Naive thymus-derived CD4-positive, alpha-beta T cell (primary cell): ENCODE measurements at regions of chr6 and their contacts with region 1.

Region 1: DNA sequence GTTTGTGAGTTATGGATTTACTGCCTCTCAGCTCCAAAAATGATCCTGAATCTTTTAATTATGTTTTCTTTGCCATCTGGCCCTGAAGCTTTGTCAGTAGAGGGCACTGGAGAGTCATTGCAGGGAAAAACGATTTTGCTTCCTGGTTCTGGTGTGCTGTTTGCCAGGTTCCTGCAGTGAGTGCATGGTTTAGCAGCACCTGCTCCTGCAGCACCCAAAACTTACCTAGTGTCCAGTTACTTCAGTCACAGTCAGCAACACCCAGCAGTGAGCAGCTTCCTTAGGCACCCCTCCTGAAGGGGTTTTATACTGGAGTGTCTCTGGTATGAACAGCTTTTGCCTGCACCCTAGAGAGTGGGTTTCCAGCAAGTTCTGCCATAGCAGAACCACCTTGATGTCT is 6.0 kb upstream of the TRIM26 start:
- DNase-seq: peak in 8 of 9 donors; percentile 17 to 70 (median 54)
- ATAC-seq: peak; percentile 79
- H3K4me3 ChIP-seq: no peak overlapping the region
- H3K4me3 Mint-ChIP-seq: no peak overlapping the region
- H3K27ac ChIP-seq: no peak overlapping the region
- H3K27ac Mint-ChIP-seq: peak overlapping the region in 5 of 9 donors; percentile 3 to 80 (median 55)
- H3K4me1 ChIP-seq: peaks cover 4 to 5% of the 10 kb centered on the region in 2 donors
- H3K4me1 Mint-ChIP-seq: peaks cover 10 to 23% (median 20%) of the 10 kb centered on the region in 7 donors
- H3K27me3 ChIP-seq: no peaks in the 10 kb centered on the region
- H3K27me3 Mint-ChIP-seq: peaks cover 0 to 6% (median 0%) of the 10 kb centered on the region in 5 donors

Region 2: GRCh38 chr6:30238174-30238795 is 19.0 kb after region 1 on chr6:
- CTCF ChIA-PET with region 1: interaction called, 3 read pairs
- POLR2A ChIA-PET with region 1: interaction called, 3 read pairs
- intact Hi-C with region 1: loop called in 1 of 2 experiments (anchors 1 kb)
- DNase-seq: peak in 5 of 9 donors; percentile 8 to 36 (median 27)
- ATAC-seq: peak; percentile 62
- H3K4me3 ChIP-seq: no peak overlapping the region
- H3K4me3 Mint-ChIP-seq: no peak overlapping the region
- H3K27ac ChIP-seq: no peak overlapping the region
- H3K27ac Mint-ChIP-seq: no peak overlapping the region
- H3K4me1 ChIP-seq: no peaks in the 10 kb centered on the region
- H3K4me1 Mint-ChIP-seq: peaks cover 0 to 4% (median 0%) of the 10 kb centered on the region in 7 donors
- H3K27me3 ChIP-seq: peaks cover 0 to 3% of the 10 kb centered on the region in 2 donors
- H3K27me3 Mint-ChIP-seq: peaks cover 18 to 59% (median 32%) of the 10 kb centered on the region in 5 donors

Region 3: GRCh38 chr6:30259140-30260035 is 40.1 kb after region 1 on chr6:
- CTCF ChIA-PET with region 1: interaction called, 3 read pairs
- POLR2A ChIA-PET with region 1: no interaction called
- intact Hi-C with region 1: loop called (anchors 1 to 5 kb)
- DNase-seq: peak; percentile 42 to 68 (median 53)
- ATAC-seq: peak; percentile 93
- H3K4me3 ChIP-seq: peak overlapping the region; percentile 79
- H3K4me3 Mint-ChIP-seq: peak overlapping the region; percentile 78 to 97 (median 90)
- H3K27ac ChIP-seq: peak overlapping the region; percentile 78
- H3K27ac Mint-ChIP-seq: peak overlapping the region in 8 of 9 donors; percentile 65 to 91 (median 78)
- H3K4me1 ChIP-seq: peaks cover 5 to 6% of the 10 kb centered on the region in 2 donors
- H3K4me1 Mint-ChIP-seq: peaks cover 7 to 17% (median 13%) of the 10 kb centered on the region in 7 donors
- H3K27me3 ChIP-seq: no peaks in the 10 kb centered on the region
- H3K27me3 Mint-ChIP-seq: peaks cover 0 to 35% (median 0%) of the 10 kb centered on the region in 5 donors

Region 4: GRCh38 chr6:30396833-30397479 is 177.7 kb after region 1 on chr6:
- CTCF ChIA-PET with region 1: interaction called, 10 read pairs
- POLR2A ChIA-PET with region 1: interaction called, 5 read pairs
- intact Hi-C with region 1: loop called (anchors 1 kb)
- DNase-seq: peak; percentile 58 to 89 (median 76)
- ATAC-seq: peak; percentile 99
- H3K4me3 ChIP-seq: no peak overlapping the region
- H3K4me3 Mint-ChIP-seq: peak overlapping the region in 2 of 10 donors; percentile 39 to 44
- H3K27ac ChIP-seq: no peak overlapping the region
- H3K27ac Mint-ChIP-seq: peak overlapping the region in 1 of 9 donors; percentile 67
- H3K4me1 ChIP-seq: no peaks in the 10 kb centered on the region
- H3K4me1 Mint-ChIP-seq: peaks cover 0 to 6% (median 0%) of the 10 kb centered on the region in 7 donors
- H3K27me3 ChIP-seq: peaks cover 0 to 4% of the 10 kb centered on the region in 2 donors
- H3K27me3 Mint-ChIP-seq: peaks cover 20 to 51% (median 40%) of the 10 kb centered on the region in 5 donors